Right ventricle myocardium inferior (tissue), 1 donor: ENCODE measurements at regions of chr5 and their contacts with region 1.

Region 1: DNA sequence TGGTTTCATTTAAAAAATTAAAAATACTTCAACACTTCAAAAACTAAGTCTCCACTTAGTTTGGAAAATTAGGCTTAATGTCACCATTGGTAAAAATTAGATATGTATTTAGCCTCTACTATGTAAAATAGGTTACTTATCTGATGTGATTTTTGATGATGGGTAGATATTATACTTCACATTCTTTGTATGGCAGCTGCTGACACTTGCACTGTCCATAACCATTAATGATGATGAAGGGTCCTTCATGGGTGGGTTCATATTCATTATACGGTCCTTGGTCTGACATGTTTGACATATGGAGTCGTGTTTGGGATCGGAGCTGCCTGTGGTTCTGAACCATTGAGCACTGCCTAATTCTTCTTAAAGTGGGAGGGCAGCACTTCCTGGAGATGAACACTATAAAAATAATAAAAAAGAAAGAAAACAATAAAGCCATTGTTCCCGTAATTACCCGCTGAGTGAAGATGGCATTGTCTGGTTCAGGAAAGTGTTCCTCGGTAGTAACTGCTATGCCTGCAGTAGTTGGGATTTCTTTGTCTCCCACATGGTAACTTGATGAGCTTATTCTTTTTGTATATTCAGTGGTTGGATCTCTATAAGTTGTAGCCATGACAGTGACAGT is 2.2 kb downstream of the LRRTM2 start:
- DNase-seq: no peak
- ATAC-seq: no peak

Region 2: DNA sequence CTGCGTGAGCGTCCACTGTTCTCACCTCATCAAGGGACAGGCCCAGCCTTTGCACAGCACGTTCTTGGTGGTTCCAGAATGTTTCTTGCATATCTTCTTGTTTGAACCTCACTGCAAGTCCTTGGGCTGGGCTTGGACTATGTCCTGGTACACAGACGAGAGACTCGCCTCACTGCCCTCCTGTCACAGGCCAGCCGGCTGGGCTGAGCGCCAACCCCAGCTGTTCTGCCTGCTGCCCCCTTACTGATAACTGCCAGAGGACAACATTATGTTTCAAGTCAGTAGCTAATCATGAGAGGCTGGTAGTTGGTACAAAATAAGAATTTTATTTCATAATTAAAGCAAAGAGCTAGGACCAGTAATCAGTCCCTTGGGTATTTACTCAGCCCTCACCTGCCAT is 55.0 kb after region 1 on chr5:
- intact Hi-C with region 1: loop called (anchors 2 kb)
- DNase-seq: peak; percentile 86
- ATAC-seq: peak; percentile 83